ENCODE measurements at regions of chr3 and their contacts with region 1.

Region 1: DNA sequence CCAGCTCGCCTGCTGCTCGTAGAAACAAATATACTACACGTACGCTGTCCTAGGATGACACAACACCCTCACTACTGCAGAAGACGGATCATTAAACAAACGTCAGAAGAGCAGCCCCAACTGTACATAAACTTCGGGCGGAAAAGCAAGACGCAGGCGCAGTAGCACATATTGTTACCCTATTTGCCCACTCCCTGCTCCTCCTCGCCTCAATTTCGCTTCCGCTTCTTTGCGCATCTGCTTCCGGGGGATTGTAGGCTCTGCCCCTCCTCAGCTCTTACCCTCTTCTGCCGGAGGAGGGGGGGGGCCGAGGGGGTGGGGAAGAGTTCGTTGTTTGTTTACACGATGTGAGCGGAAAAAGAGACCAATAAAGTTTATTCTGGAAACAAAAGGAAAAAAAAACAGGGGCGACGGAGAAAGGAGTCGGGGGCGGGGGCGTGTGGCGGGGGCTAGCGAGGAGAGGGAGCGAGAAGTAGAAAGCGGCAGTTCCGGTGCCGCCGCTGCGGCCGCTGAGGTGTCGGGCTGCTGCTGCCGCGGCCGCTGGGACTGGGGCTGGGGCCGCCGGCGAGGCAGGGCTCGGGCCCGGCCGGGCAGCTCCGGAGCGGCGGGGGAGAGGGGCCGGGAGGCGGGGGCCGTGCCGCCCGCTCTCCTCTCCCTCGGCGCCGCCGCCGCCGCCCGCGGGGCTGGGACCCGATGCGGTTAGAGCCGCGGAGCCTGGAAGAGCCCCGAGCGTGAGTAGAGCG is at the start of gene PIK3CA:
- DNase-seq: peak; percentile 95
- ATAC-seq: peak; percentile 79
- H3K4me3 Mint-ChIP-seq: no peak within 1 kb of the TSS
- H3K27ac Mint-ChIP-seq: peak within 1 kb of the TSS; percentile 94
- H3K4me1 Mint-ChIP-seq: peaks cover 39% of the 10 kb centered on the region
- H3K27me3 Mint-ChIP-seq: peaks cover 3% of the 10 kb centered on the region
- total RNA-seq, gene PIK3CA: 15.5 to 17.7 TPM

Region 2: DNA sequence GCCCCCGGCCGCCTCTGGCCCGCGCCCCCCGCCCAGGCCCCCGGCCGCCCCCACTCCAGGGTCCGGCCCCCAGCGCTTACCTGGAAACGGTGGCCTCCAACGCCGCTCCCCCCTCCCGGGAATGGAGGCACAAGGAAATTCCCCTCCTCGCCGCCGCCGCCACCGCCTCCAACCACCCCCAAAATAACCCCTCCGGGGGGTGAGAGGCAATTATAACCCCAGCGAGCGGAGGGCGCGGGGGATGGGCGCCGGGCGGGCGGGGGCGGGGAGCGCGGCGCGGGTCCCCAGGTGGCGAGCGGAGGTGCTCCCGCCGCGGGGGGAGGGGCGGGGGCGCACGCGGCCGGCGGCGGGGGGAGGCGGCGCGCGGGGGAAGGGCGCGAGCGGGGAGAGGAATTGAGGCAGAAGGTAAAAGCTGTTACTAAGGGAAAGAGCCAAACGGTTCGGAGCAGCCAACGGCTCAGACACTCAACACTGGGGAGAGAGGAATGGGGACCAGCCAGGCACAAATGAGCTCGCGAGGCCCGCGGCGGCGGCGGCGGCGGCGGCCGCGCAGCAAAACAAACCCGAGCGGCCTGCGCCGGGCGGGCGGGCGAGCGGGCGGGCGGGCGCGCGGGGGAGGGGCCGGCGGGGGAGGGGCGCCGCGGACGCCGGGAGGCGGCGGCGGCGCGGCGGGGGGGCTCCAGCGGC is 1950.9 kb before region 1 on chr3 and contains the start of gene TBL1XR1:
- CTCF ChIA-PET with region 1: no interaction called
- POLR2A ChIA-PET with region 1: no interaction called
- intact Hi-C with region 1: loop called in 1 of 2 experiments (anchors 5 kb)
- DNase-seq: peak; percentile 91
- ATAC-seq: peak; percentile 34
- H3K4me3 Mint-ChIP-seq: peak within 1 kb of the TSS; percentile 88
- H3K27ac Mint-ChIP-seq: peak within 1 kb of the TSS; percentile 99
- H3K4me1 Mint-ChIP-seq: peaks cover 65% of the 10 kb centered on the region
- H3K27me3 Mint-ChIP-seq: no peaks in the 10 kb centered on the region
- total RNA-seq, gene TBL1XR1: 164 to 226 TPM

Region 3: GRCh38 chr3:178823591-178824246 is 324.3 kb before region 1 on chr3:
- CTCF ChIA-PET with region 1: no interaction called
- POLR2A ChIA-PET with region 1: no interaction called
- intact Hi-C with region 1: no loop called
- DNase-seq: no peak
- ATAC-seq: no peak
- H3K4me3 Mint-ChIP-seq: no peak overlapping the region
- H3K27ac Mint-ChIP-seq: no peak overlapping the region
- H3K4me1 Mint-ChIP-seq: no peaks in the 10 kb centered on the region
- H3K27me3 Mint-ChIP-seq: peaks cover 4% of the 10 kb centered on the region

Region 4: GRCh38 chr3:179181021-179181472 is 33.0 kb after region 1 on chr3:
- CTCF ChIA-PET with region 1: interaction called, 5 read pairs
- POLR2A ChIA-PET with region 1: interaction called, 4 read pairs
- intact Hi-C with region 1: loop called (anchors 1 kb)
- DNase-seq: no peak
- ATAC-seq: peak; percentile 78
- H3K4me3 Mint-ChIP-seq: no peak overlapping the region
- H3K27ac Mint-ChIP-seq: peak overlapping the region; percentile 60
- H3K4me1 Mint-ChIP-seq: peaks cover 43% of the 10 kb centered on the region
- H3K27me3 Mint-ChIP-seq: no peaks in the 10 kb centered on the region

Region 5: GRCh38 chr3:179260949-179261765 is 113.1 kb after region 1 on chr3:
- CTCF ChIA-PET with region 1: no interaction called
- POLR2A ChIA-PET with region 1: no interaction called
- intact Hi-C with region 1: loop called (anchors 1 to 2 kb)
- DNase-seq: peak; percentile 80
- ATAC-seq: peak; percentile 93
- H3K4me3 Mint-ChIP-seq: peak overlapping the region; percentile 64
- H3K27ac Mint-ChIP-seq: no peak overlapping the region
- H3K4me1 Mint-ChIP-seq: peaks cover 10% of the 10 kb centered on the region
- H3K27me3 Mint-ChIP-seq: no peaks in the 10 kb centered on the region

Region 6: DNA sequence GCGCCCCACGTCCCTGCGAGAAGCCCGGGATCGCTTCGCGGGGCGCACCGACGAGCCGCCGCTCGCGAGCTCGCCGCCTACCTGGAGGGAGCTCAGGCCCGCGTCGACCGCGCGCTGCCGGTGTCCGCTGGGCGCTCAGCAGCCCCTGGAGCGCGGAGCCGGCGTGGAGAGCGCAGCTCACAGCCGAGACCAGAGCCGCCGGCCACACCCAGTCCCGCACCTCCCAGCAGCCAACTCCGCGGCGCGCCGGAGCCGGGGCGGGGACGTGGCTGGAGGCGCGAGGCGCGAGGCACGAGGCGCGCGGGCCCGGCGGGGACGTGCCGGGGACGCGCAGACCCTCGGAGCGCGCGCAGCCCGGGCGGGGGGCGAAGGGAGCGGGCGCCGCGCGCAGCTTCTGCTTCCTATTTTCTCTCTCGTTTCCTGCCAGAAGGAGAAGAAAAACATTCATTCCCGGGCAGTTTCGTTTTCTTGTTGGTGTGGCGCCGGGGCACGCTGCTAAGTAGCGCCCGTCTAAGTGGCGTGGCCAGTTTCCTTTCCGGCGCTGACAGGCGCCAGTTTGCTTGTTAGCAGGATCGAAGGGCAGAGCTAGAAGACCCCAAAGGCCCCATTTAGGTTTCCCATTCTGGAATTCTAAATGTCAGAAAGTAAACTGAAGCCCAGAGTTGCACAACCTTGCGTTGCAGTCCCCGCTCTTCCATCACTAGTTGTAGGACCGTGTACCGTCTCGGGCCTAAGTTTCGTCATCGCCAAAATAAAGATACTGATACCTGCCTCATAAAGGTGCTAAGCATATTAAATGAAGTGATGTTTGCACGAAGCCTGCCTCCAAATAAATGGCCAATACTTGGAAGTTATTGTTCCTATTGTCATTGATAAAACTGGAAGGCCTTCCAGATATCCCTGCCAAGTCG is 303.5 kb after region 1 on chr3 and contains the start of gene GNB4:
- CTCF ChIA-PET with region 1: no interaction called
- POLR2A ChIA-PET with region 1: no interaction called
- intact Hi-C with region 1: loop called in 1 of 2 experiments (anchors 5 kb)
- DNase-seq: peak; percentile 66
- ATAC-seq: peak; percentile 84
- H3K4me3 Mint-ChIP-seq: peak within 1 kb of the TSS; percentile 67
- H3K27ac Mint-ChIP-seq: peak within 1 kb of the TSS; percentile 55
- H3K4me1 Mint-ChIP-seq: peaks cover 19% of the 10 kb centered on the region
- H3K27me3 Mint-ChIP-seq: peaks cover 63% of the 10 kb centered on the region
- total RNA-seq, gene GNB4: 0.75 to 0.88 TPM

Region 7: GRCh38 chr3:179653096-179653797 is 505.2 kb after region 1 on chr3:
- CTCF ChIA-PET with region 1: no interaction called
- POLR2A ChIA-PET with region 1: no interaction called
- intact Hi-C with region 1: loop called in 1 of 2 experiments (anchors 2 kb)
- DNase-seq: peak; percentile 81
- ATAC-seq: peak; percentile 69
- H3K4me3 Mint-ChIP-seq: peak overlapping the region; percentile 81
- H3K27ac Mint-ChIP-seq: peak overlapping the region; percentile 82
- H3K4me1 Mint-ChIP-seq: peaks cover 22% of the 10 kb centered on the region
- H3K27me3 Mint-ChIP-seq: peaks cover 7% of the 10 kb centered on the region

Measured in activated CD4-positive, alpha-beta T cell treated with anti-CD3 and anti-CD28 coated beads for 36 hours (primary cell).